H1 (cell line): ENCODE measurements at regions of chr19 and their contacts with region 1.

Region 1: DNA sequence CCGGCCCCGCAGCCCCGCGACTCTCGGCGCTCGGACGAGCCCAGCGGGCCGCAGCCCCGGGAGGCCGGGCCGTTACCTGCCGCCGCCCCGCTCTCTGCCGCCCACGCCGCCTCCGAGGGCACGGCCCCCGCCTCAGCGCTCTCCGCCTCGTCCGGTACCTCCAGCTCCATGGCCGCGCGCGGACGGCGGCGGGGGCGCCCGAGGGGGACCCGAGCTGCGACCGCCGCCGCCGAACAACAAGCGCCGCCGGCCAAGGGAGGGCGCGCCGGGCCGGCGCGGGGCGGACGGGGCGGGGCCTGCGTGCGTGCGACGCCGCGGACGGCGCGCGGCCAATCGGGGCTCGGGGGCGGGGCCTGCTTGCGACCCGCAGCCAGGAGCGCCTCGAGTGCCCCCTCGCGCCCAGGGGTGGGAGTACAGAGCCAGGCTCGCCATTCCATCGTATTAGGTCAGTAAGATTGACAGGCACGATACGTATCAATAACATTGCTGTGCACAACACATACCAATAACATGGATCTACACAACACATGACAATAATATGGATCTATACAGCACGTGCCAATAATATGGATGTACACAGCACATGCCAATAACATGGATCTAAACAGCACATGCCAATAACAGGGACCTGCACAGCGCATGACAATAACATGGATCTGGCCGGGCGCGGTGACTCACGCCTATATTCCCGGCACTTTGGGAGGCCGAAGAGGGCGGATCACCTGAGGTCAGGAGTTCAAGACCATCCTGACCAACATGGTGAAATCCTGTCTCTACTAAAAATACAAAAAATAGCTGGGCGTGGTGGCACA is at the start of gene PIP5K1C:
- DNase-seq: peak in 1 of 2 experiments; percentile 99
- H3K4me3 ChIP-seq: peak within 1 kb of the TSS; percentile 59 to 85 (median 72)
- H3K27ac ChIP-seq: no peak within 1 kb of the TSS
- H3K4me1 ChIP-seq: peaks cover 0 to 8% (median 2%) of the 10 kb centered on the region in 4 experiments; a peak in 3 of 7 replicates
- H3K27me3 ChIP-seq: no peaks in the 10 kb centered on the region; a peak in 2 of 7 replicates
- CTCF ChIP-seq: peak; percentile 75 to 84 (median 78)
- EP300 ChIP-seq: no peak
- POLR2A ChIP-seq: no peak
- RAD21 ChIP-seq: peak; percentile 64 to 72
- total RNA-seq, gene PIP5K1C: 31.3 and 32.9 TPM in 2 replicates

Region 2: DNA sequence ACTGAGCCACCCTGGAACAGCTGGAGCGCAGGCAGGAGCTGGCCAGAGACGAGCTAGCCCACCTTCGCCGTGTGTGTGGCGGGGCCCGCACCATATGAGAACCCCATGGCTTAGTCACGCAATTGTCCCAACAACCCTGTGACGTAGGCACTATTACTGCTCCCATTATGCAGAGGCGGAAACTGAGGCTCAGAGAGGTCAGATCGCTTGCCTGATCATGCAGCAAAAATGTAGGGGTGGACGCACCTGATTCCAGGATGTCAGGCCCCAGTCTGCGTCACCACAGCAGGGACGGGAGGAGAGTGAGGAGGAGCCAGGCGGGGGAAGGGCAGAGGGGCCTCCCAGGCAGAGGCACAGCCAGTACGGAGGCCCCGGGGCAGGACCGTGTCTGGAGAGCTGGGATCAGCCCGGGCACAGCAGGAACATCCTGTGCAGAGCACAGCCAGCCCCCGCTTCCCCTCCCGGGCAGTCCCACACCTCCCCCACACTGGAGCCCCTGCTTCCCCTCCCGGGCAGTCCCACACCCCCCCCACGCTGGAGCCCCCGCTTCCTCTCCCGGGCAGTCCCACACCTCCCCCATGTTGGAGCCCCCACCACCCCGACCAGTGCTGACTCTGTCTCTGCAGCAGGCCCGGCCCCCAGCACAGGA is 16.9 kb before region 1 on chr19:
- CTCF ChIA-PET with region 1: interaction called, 12 read pairs
- POLR2A ChIA-PET with region 1: interaction called, 10 read pairs
- DNase-seq: peak in 1 of 2 experiments; percentile 79
- H3K4me3 ChIP-seq: 0 out of 8 replicates have a peak overlapping the region, but pooled peaks of 1 of the 4 experiments have one; percentile 2
- H3K27ac ChIP-seq: peak overlapping the region; percentile 62; the same call in 1 of the 2 replicates
- H3K4me1 ChIP-seq: peaks cover 0 to 39% (median 28%) of the 10 kb centered on the region in 4 experiments; a peak in 6 of 7 replicates
- H3K27me3 ChIP-seq: no peaks in the 10 kb centered on the region; a peak in 1 of 7 replicates
- CTCF ChIP-seq: no peak
- EP300 ChIP-seq: peak in 1 of 2 experiments; percentile 23; a peak in 1 of 3 replicates
- POLR2A ChIP-seq: no peak
- RAD21 ChIP-seq: no peak

Region 3: GRCh38 chr19:3762501-3763459 is 62.4 kb after region 1 on chr19 and contains the start of gene MRPL54:
- CTCF ChIA-PET with region 1: no interaction called
- POLR2A ChIA-PET with region 1: no interaction called
- DNase-seq: peak; percentile 96 to 99
- H3K4me3 ChIP-seq: peak within 1 kb of the TSS; percentile 88 to 95 (median 90)
- H3K27ac ChIP-seq: peak within 1 kb of the TSS; percentile 85
- H3K4me1 ChIP-seq: no peaks in the 10 kb centered on the region
- H3K27me3 ChIP-seq: no peaks in the 10 kb centered on the region
- CTCF ChIP-seq: no peak
- EP300 ChIP-seq: no peak
- POLR2A ChIP-seq: peak in 1 of 2 experiments; percentile 90; a peak in 2 of 3 replicates
- RAD21 ChIP-seq: no peak
- total RNA-seq, gene MRPL54: 72.8 and 80.3 TPM in 2 replicates